Lower lobe of right lung (tissue), 2 donors: ENCODE measurements at regions of chr6 and their contacts with region 1.

Region 1: GRCh38 chr6:108541838-108542759 is 18.6 kb upstream of the FOXO3 start:
- DNase-seq: peak; percentile 68
- ATAC-seq: peak; percentile 80 to 94
- H3K4me3 ChIP-seq: no peak overlapping the region
- H3K27ac ChIP-seq: no peak overlapping the region
- H3K4me1 ChIP-seq: peaks cover 10% of the 10 kb centered on the region
- H3K27me3 ChIP-seq: no peaks in the 10 kb centered on the region
- CTCF ChIP-seq: peak; percentile 91

Region 2: DNA sequence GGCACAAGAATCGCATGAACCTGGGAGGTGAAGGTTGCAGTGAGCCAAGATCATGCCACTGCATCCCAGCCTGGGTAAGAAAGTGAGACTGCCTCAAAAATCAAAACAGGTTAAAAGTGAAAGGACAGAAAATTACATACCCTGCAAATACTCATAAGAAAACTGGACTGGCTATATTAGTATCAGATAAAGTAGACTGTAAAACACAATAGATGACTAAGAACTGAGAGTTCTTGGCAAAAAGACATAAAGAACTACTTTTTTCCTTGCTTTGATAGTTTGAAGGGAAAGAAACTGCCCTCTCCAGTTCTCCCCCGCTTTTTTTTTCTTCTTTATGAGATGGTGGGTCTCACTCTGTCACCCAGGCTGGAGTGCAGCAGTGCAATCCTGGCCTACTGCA is 298.3 kb before region 1 on chr6:
- intact Hi-C with region 1: no loop called
- DNase-seq: no peak
- ATAC-seq: no peak
- H3K4me3 ChIP-seq: no peak overlapping the region
- H3K27ac ChIP-seq: no peak overlapping the region
- H3K4me1 ChIP-seq: peaks cover 3% of the 10 kb centered on the region
- H3K27me3 ChIP-seq: no peaks in the 10 kb centered on the region
- CTCF ChIP-seq: no peak

Region 3: DNA sequence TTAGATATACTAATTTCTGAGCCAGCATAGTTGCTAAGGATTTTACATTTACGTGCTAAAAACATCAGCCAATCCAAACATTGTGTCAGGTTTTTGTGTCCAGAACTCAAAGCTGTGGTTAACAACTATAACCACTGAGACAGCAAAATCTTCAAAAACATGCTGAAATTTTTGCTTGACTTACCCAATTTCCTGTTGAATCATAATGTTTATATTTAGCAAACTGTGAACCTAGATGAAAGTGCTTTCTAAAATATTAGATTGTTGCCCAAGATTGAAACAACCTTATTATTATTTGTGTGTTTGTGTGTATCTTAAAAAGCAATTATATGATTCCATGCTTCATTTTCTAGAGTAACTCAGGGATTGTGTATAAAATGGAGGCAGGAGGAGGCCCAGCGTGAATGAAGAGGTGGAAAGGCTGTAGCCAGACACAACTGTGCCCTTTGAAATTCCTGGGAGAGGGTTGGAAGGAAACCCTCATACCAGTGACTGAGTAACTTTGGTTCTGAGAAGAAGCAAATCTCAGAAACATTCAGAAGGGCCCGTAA is 354.1 kb after region 1 on chr6:
- intact Hi-C with region 1: loop called (anchors 5 kb)
- DNase-seq: no peak
- ATAC-seq: peak; percentile 57 to 63
- H3K4me3 ChIP-seq: no peak overlapping the region
- H3K27ac ChIP-seq: peak overlapping the region; percentile 54
- H3K4me1 ChIP-seq: peaks cover 34% of the 10 kb centered on the region
- H3K27me3 ChIP-seq: no peaks in the 10 kb centered on the region
- CTCF ChIP-seq: no peak

Region 4: GRCh38 chr6:109073344-109074132 is 531.4 kb after region 1 on chr6:
- intact Hi-C with region 1: loop called (anchors 10 kb)
- DNase-seq: no peak
- ATAC-seq: peak; percentile 51 to 69
- H3K4me3 ChIP-seq: no peak overlapping the region
- H3K27ac ChIP-seq: no peak overlapping the region
- H3K4me1 ChIP-seq: peaks cover 24% of the 10 kb centered on the region
- H3K27me3 ChIP-seq: no peaks in the 10 kb centered on the region
- CTCF ChIP-seq: peak; percentile 68